Naive thymus-derived CD4-positive, alpha-beta T cell (primary cell): ENCODE measurements at regions of chr4 and their contacts with region 1.

Region 1: GRCh38 chr4:98995183-98996055 is at the start of gene METAP1:
- DNase-seq: peak; percentile 94 to 97 (median 96)
- ATAC-seq: peak; percentile 90
- H3K4me3 ChIP-seq: peak within 1 kb of the TSS; percentile 91
- H3K4me3 Mint-ChIP-seq: peak within 1 kb of the TSS; percentile 79 to 98 (median 94)
- H3K27ac ChIP-seq: peak within 1 kb of the TSS; percentile 92
- H3K27ac Mint-ChIP-seq: peak within 1 kb of the TSS; percentile 97 to 99 (median 99)
- H3K4me1 ChIP-seq: peaks cover 10 to 13% of the 10 kb centered on the region in 2 donors
- H3K4me1 Mint-ChIP-seq: peaks cover 28 to 49% (median 42%) of the 10 kb centered on the region in 7 donors
- H3K27me3 ChIP-seq: no peaks in the 10 kb centered on the region
- H3K27me3 Mint-ChIP-seq: no peaks in the 10 kb centered on the region
- total RNA-seq, gene METAP1: 29.1 to 50.7 (median 40.2) TPM

Region 2: GRCh38 chr4:98150092-98150761 is 845.2 kb before region 1 on chr4:
- CTCF ChIA-PET with region 1: interaction called, 5 read pairs
- POLR2A ChIA-PET with region 1: no interaction called
- intact Hi-C with region 1: loop called in 1 of 2 experiments (anchors 1 kb)
- DNase-seq: peak in 1 of 9 donors; percentile 11
- ATAC-seq: no peak
- H3K4me3 ChIP-seq: no peak overlapping the region
- H3K4me3 Mint-ChIP-seq: no peak overlapping the region
- H3K27ac ChIP-seq: no peak overlapping the region
- H3K27ac Mint-ChIP-seq: peak overlapping the region in 2 of 9 donors; percentile 5 to 68
- H3K4me1 ChIP-seq: no peaks in the 10 kb centered on the region
- H3K4me1 Mint-ChIP-seq: peaks cover 0 to 14% (median 5%) of the 10 kb centered on the region in 7 donors
- H3K27me3 ChIP-seq: no peaks in the 10 kb centered on the region
- H3K27me3 Mint-ChIP-seq: peaks cover 0 to 11% (median 0%) of the 10 kb centered on the region in 5 donors

Region 3: DNA sequence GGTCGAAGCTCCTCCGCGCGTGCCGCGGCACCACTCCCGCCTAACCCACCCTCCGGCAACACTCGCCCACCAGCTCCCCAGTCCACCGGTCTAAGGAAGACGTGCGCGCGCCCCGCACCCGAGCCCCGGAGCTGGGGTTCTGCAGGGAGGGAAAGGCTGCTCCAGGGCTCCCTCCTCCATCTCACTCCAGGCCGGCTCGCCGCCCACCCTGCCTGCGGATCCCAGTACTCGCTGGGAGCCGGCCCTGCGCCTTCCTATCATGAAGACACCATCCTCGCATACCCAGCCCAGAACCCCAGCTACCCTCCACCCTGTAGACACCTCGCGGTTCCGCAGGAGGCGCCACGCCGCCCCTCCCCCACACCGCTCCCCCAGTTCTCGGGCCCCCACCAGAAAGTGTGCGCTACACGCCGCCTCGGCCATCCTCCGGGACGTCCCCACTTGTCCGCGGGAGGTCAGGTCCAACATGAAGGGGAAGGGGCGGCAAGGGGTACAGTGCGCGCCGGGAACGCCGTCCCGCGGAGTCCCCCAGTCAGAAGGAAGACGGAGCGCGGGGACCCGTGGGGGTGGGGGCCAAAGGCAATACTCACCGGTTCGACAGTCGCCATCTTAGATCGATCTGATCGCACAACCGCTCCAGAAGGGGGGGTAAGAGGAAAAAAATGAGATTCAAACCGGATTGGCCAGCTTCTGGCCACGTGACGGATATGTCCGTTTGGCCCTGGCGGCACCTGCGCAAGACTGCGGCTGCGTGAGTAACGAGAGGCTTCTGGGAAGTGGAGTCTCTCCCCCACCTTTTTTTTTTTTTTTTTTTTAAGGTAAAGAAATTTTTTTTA is 66.7 kb before region 1 on chr4 and contains the start of gene EIF4E:
- CTCF ChIA-PET with region 1: interaction called, 6 read pairs
- POLR2A ChIA-PET with region 1: interaction called, 21 read pairs
- intact Hi-C with region 1: loop called (anchors 1 kb)
- DNase-seq: peak; percentile 81 to 99 (median 97)
- ATAC-seq: peak; percentile 88
- H3K4me3 ChIP-seq: peak within 1 kb of the TSS; percentile 96
- H3K4me3 Mint-ChIP-seq: peak within 1 kb of the TSS; percentile 91 to 100 (median 96)
- H3K27ac ChIP-seq: peak within 1 kb of the TSS; percentile 88
- H3K27ac Mint-ChIP-seq: peak within 1 kb of the TSS; percentile 88 to 98 (median 97)
- H3K4me1 ChIP-seq: peaks cover 9 to 15% of the 10 kb centered on the region in 2 donors
- H3K4me1 Mint-ChIP-seq: peaks cover 12 to 52% (median 38%) of the 10 kb centered on the region in 7 donors
- H3K27me3 ChIP-seq: no peaks in the 10 kb centered on the region
- H3K27me3 Mint-ChIP-seq: peaks cover 0 to 4% (median 0%) of the 10 kb centered on the region in 5 donors
- total RNA-seq, gene EIF4E: 53.6 to 96.1 (median 63.0) TPM

Region 4: GRCh38 chr4:99013884-99014523 is 18.6 kb after region 1 on chr4:
- CTCF ChIA-PET with region 1: no interaction called
- POLR2A ChIA-PET with region 1: no interaction called
- intact Hi-C with region 1: no loop called
- DNase-seq: no peak
- ATAC-seq: no peak
- H3K4me3 ChIP-seq: no peak overlapping the region
- H3K4me3 Mint-ChIP-seq: no peak overlapping the region
- H3K27ac ChIP-seq: no peak overlapping the region
- H3K27ac Mint-ChIP-seq: no peak overlapping the region
- H3K4me1 ChIP-seq: no peaks in the 10 kb centered on the region
- H3K4me1 Mint-ChIP-seq: peaks cover 4 to 66% (median 39%) of the 10 kb centered on the region in 7 donors
- H3K27me3 ChIP-seq: no peaks in the 10 kb centered on the region
- H3K27me3 Mint-ChIP-seq: no peaks in the 10 kb centered on the region

Region 5: DNA sequence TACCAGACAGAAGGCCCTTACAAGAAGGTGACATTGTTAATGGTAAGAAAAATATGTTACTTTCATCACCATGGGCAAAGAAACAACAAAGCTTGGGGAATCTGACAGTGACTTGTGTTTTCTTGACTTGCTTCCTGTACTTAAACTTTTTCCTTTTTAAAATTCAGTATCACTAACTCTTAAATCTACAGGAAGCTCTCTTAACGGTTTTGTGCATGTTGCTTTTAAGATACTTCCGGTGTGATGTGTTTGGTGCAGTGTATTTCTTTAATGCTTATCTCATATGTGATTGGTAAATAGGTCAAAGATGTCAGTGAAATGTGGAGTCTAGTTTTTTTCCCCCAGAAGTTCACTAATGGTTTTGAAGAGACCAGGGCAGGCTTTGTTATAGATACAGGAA is 47.9 kb after region 1 on chr4:
- CTCF ChIA-PET with region 1: interaction called, 19 read pairs
- POLR2A ChIA-PET with region 1: interaction called, 14 read pairs
- intact Hi-C with region 1: loop called (anchors 1 to 2 kb)
- DNase-seq: peak in 7 of 9 donors; percentile 22 to 79 (median 66)
- ATAC-seq: peak; percentile 93
- H3K4me3 ChIP-seq: no peak overlapping the region
- H3K4me3 Mint-ChIP-seq: peak overlapping the region in 9 of 10 donors; percentile 11 to 79 (median 64)
- H3K27ac ChIP-seq: peak overlapping the region; percentile 55
- H3K27ac Mint-ChIP-seq: peak overlapping the region; percentile 80 to 90 (median 85)
- H3K4me1 ChIP-seq: peaks cover 14 to 15% of the 10 kb centered on the region in 2 donors
- H3K4me1 Mint-ChIP-seq: peaks cover 10 to 31% (median 24%) of the 10 kb centered on the region in 7 donors
- H3K27me3 ChIP-seq: no peaks in the 10 kb centered on the region
- H3K27me3 Mint-ChIP-seq: no peaks in the 10 kb centered on the region

Region 6: DNA sequence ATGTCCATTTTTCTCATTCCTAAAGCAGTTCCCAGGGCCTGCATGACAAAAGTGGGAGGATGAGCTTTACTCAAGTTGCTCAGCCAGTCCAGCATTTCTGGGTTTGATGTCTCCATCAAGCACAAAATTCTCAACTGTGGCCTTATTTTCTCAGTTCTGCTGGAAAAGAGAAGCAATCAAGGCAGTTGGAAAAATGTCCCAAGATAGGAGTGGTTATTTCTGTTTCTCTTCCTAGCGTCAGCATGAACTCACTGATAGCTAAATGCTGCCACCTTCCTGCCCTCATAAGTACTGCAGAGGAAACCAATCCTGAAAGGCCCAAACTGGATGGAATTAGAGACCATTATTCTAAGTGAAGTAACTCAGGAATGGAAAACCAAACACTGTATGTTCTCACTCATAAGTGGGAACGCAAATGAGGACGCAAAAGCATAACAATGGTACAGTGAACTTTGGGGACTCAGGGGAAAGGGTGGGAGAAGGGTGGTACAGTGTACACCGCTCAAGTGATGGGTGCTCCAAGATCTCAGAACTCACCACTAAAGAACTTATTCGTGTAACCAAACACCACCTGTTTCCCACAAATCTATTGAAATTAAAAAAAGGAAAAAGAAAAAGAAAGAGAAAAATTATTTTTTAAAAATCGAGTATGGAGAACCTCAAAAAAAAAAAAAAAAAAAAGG is 410.2 kb after region 1 on chr4:
- CTCF ChIA-PET with region 1: interaction called, 3 read pairs
- POLR2A ChIA-PET with region 1: no interaction called
- intact Hi-C with region 1: loop called (anchors 1 kb)
- DNase-seq: peak; percentile 13 to 62 (median 44)
- ATAC-seq: peak; percentile 86
- H3K4me3 ChIP-seq: no peak overlapping the region
- H3K4me3 Mint-ChIP-seq: no peak overlapping the region
- H3K27ac ChIP-seq: no peak overlapping the region
- H3K27ac Mint-ChIP-seq: no peak overlapping the region
- H3K4me1 ChIP-seq: no peaks in the 10 kb centered on the region
- H3K4me1 Mint-ChIP-seq: peaks cover 0 to 19% (median 0%) of the 10 kb centered on the region in 7 donors
- H3K27me3 ChIP-seq: no peaks in the 10 kb centered on the region
- H3K27me3 Mint-ChIP-seq: peaks cover 0 to 3% (median 0%) of the 10 kb centered on the region in 5 donors

Region 7: DNA sequence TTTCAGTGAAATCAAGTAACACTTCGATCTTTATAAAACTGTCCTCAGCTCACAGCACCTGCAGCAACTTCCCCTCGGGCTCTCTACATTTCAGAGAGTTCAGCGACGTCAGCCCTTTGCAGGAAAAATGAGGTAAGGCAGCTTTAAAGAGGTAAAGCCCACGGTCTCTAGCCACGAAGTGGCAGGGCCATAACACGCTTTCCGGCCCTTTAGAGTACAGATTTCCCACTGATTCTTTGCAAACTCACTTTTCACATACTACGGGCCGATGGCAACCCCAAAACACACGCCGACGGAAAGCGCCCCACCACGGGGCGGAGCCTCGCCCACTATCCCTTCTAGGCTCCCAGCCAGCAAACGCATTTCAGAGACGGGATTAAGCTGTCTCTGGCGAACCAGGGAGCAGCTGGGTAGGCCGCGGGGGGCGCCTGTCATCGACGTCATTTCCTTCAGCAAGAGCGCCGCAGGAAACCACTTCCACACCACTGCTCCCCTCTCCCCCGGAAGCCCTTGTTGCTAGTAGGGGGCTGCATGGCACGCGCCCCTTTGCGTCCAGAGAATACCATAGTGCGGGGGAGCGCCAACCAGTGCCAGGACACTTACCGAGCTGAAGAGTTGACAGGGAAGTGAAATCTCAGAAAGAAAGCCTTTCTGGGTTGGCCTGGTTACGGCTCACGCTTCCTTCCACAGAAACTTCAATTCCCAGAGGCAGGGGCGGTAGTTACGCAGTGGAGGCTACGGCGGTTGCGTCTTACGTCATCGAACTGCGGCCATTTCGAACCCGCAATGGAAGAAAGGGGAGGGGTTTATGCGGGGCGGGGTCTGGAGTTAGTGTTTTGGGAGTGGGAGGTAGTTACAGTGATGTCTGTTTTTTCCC is 568.1 kb after region 1 on chr4 and contains the start of gene TRMT10A:
- CTCF ChIA-PET with region 1: no interaction called
- POLR2A ChIA-PET with region 1: no interaction called
- intact Hi-C with region 1: loop called (anchors 1 kb)
- DNase-seq: peak; percentile 79 to 98 (median 98)
- ATAC-seq: peak; percentile 91
- H3K4me3 ChIP-seq: peak within 1 kb of the TSS; percentile 92
- H3K4me3 Mint-ChIP-seq: peak within 1 kb of the TSS; percentile 77 to 99 (median 98)
- H3K27ac ChIP-seq: peak within 1 kb of the TSS; percentile 91
- H3K27ac Mint-ChIP-seq: peak within 1 kb of the TSS; percentile 98 to 100 (median 100)
- H3K4me1 ChIP-seq: no peaks in the 10 kb centered on the region
- H3K4me1 Mint-ChIP-seq: peaks cover 0 to 33% (median 28%) of the 10 kb centered on the region in 7 donors
- H3K27me3 ChIP-seq: no peaks in the 10 kb centered on the region
- H3K27me3 Mint-ChIP-seq: peaks cover 13 to 29% (median 23%) of the 10 kb centered on the region in 5 donors
- total RNA-seq, gene TRMT10A: 3.9 to 9.1 (median 7.7) TPM

Region 8: DNA sequence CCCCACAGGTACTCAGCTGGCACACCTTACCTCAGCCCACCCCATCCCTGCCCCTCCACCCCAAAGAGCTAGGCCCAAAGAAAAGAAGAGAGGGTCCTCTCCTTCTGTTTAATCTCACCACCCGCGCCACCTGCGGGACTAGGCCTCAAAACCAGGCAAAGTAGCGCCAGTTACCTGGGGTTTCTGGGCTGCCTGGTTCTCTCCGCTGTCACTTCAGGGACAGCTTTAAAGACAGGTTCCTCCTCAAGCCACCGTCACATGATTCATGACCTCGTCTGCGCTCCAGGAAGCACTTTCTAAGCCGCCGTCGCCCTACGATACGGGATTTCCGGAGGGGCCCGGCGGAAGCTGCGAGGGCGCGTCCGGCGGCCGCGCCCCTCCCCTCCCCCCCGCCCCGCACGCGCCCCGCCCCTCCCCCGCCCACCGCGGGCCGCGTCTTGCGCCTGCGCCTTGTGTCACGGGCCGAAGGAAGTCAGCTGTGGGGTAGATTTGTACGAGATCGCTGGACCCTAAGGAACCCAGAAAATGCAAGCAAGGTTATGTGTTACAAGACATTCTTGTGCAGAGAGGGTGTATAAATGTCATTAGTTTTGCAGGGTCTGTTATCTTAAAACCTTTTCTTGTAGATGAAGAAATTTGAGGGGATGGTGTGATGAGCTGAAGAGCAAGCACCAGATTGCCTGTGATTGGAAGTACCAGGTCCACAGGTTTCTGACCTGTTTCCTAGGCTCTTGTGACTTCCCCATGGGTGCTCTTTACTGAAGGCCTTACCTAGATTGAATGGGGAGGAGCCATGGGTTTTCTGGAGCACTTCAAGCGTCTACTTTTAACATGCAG is 899.0 kb after region 1 on chr4 and contains the start of gene LAMTOR3:
- CTCF ChIA-PET with region 1: no interaction called
- POLR2A ChIA-PET with region 1: interaction called, 3 read pairs
- intact Hi-C with region 1: loop called (anchors 1 to 5 kb)
- DNase-seq: peak; percentile 70 to 92 (median 89)
- ATAC-seq: peak; percentile 98
- H3K4me3 ChIP-seq: peak within 1 kb of the TSS; percentile 92
- H3K4me3 Mint-ChIP-seq: peak within 1 kb of the TSS; percentile 96 to 99 (median 98)
- H3K27ac ChIP-seq: peak within 1 kb of the TSS; percentile 96
- H3K27ac Mint-ChIP-seq: peak within 1 kb of the TSS; percentile 96 to 99 (median 98)
- H3K4me1 ChIP-seq: peaks cover 13 to 25% of the 10 kb centered on the region in 2 donors
- H3K4me1 Mint-ChIP-seq: peaks cover 25 to 55% (median 52%) of the 10 kb centered on the region in 7 donors
- H3K27me3 ChIP-seq: no peaks in the 10 kb centered on the region
- H3K27me3 Mint-ChIP-seq: no peaks in the 10 kb centered on the region
- total RNA-seq, gene LAMTOR3: 20.1 to 32.6 (median 27.4) TPM